ENCODE measurements at regions of chr3 and their contacts with region 1.

Region 1: GRCh38 chr3:12484198-12484974 is at the start of gene TSEN2:
- DNase-seq: peak; percentile 99
- H3K4me3 ChIP-seq: peak within 1 kb of the TSS; percentile 96 to 99
- H3K27ac ChIP-seq: peak within 1 kb of the TSS; percentile 57 to 84; a peak in 3 of 4 replicates
- H3K4me1 ChIP-seq: peaks cover 11 to 18% of the 10 kb centered on the region in 2 experiments; a peak in 1 of 4 replicates
- H3K27me3 ChIP-seq: no peaks in the 10 kb centered on the region
- CTCF ChIP-seq: peak; percentile 27
- EP300 ChIP-seq: no peak; a peak in 1 of 4 replicates
- RAD21 ChIP-seq: peak; percentile 58
- polyA plus RNA-seq, gene TSEN2: 13.0 and 18.6 TPM in 2 replicates

Region 2: GRCh38 chr3:12135029-12135657 is 349.2 kb before region 1 on chr3:
- CTCF ChIA-PET with region 1: interaction called, 97 read pairs
- POLR2A ChIA-PET with region 1: interaction called, 4 read pairs
- DNase-seq: peak; percentile 63
- H3K4me3 ChIP-seq: peak overlapping the region in 1 of 2 experiments; percentile 23; a peak in 1 of 4 replicates
- H3K27ac ChIP-seq: no peak overlapping the region
- H3K4me1 ChIP-seq: peaks cover 0 to 10% of the 10 kb centered on the region in 2 experiments; a peak in 2 of 4 replicates
- H3K27me3 ChIP-seq: 0 out of 2 replicates have a peak, but pooled peaks cover 11% of the 10 kb centered on the region
- CTCF ChIP-seq: peak; percentile 96
- EP300 ChIP-seq: no peak
- RAD21 ChIP-seq: peak; percentile 94

Region 3: GRCh38 chr3:12143949-12144504 is 340.4 kb before region 1 on chr3:
- CTCF ChIA-PET with region 1: interaction called, 27 read pairs
- POLR2A ChIA-PET with region 1: no interaction called
- DNase-seq: no peak
- H3K4me3 ChIP-seq: no peak overlapping the region
- H3K27ac ChIP-seq: no peak overlapping the region
- H3K4me1 ChIP-seq: peaks cover 0 to 10% of the 10 kb centered on the region in 2 experiments; a peak in 1 of 4 replicates
- H3K27me3 ChIP-seq: no peaks in the 10 kb centered on the region
- CTCF ChIP-seq: no peak
- EP300 ChIP-seq: no peak
- RAD21 ChIP-seq: no peak

Region 4: GRCh38 chr3:12273045-12273695 is 211.2 kb before region 1 on chr3:
- CTCF ChIA-PET with region 1: no interaction called
- POLR2A ChIA-PET with region 1: no interaction called
- DNase-seq: no peak
- H3K4me3 ChIP-seq: no peak overlapping the region
- H3K27ac ChIP-seq: no peak overlapping the region
- H3K4me1 ChIP-seq: no peaks in the 10 kb centered on the region
- H3K27me3 ChIP-seq: no peaks in the 10 kb centered on the region
- CTCF ChIP-seq: no peak
- EP300 ChIP-seq: no peak
- RAD21 ChIP-seq: no peak

Region 5: GRCh38 chr3:12423918-12424630 is 60.3 kb before region 1 on chr3:
- CTCF ChIA-PET with region 1: interaction called, 13 read pairs
- POLR2A ChIA-PET with region 1: no interaction called
- DNase-seq: peak; percentile 40
- H3K4me3 ChIP-seq: no peak overlapping the region; a peak in 2 of 4 replicates
- H3K27ac ChIP-seq: peak overlapping the region; percentile 56 to 63; a peak in 3 of 4 replicates
- H3K4me1 ChIP-seq: peaks cover 18 to 31% of the 10 kb centered on the region in 2 experiments
- H3K27me3 ChIP-seq: no peaks in the 10 kb centered on the region
- CTCF ChIP-seq: no peak
- EP300 ChIP-seq: peak in 1 of 2 experiments; percentile 41; a peak in 2 of 4 replicates
- RAD21 ChIP-seq: no peak

Region 6: DNA sequence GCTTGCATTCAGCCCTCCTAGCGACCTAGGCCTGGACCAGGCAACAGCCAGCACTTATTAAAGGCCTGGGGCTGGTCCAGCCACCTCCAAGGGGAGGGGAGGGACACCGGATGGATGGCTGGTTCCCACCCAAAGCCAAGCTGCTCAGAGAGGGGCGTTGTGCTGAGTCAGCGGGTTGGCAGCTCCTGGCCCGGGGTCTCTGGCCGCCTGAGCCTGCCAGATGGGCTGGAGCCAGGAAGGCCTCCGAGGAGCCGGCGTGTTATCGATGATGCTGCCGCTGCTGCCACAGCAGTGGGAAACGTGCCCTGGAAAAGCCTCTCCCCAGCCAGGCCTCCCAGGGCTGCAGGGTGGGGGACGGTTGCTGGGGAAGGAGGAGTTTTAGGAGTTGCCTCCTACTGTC is 43.5 kb before region 1 on chr3:
- CTCF ChIA-PET with region 1: interaction called, 10 read pairs
- POLR2A ChIA-PET with region 1: no interaction called
- DNase-seq: peak; percentile 80
- H3K4me3 ChIP-seq: no peak overlapping the region
- H3K27ac ChIP-seq: peak overlapping the region in 1 of 2 experiments; percentile 30; a peak in 2 of 4 replicates
- H3K4me1 ChIP-seq: peaks cover 21 to 28% of the 10 kb centered on the region in 2 experiments; a peak in 3 of 4 replicates
- H3K27me3 ChIP-seq: no peaks in the 10 kb centered on the region
- CTCF ChIP-seq: no peak
- EP300 ChIP-seq: peak in 1 of 2 experiments; percentile 66; a peak in 1 of 4 replicates
- RAD21 ChIP-seq: no peak

Region 7: DNA sequence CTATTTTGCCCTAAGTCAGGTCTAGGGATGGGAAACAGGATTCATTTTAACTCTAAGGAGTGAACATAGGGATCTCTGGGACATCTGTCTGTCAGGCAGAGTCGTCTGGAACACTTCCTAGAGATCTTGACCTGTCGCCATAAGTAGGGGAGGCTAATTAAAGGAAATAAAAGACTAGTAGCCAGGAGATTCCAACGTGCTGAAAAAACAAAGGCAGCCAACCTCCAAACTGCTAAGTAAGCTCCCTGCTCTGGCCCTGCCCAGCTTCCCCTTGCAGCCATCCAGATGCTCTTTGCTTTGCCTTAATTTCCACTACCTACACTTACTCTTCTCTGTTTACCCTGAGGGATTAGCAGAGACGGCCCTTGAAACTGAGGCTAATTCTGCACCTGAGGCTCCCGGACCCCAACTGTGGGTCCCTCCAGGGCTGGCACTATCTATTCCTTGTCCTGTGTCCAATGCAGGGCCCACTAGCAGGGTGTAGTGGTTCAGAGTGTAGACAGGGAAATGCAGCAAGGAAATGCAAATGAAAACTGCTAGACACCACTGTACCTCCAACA is 18.5 kb before region 1 on chr3:
- CTCF ChIA-PET with region 1: interaction called, 18 read pairs
- POLR2A ChIA-PET with region 1: no interaction called
- DNase-seq: no peak
- H3K4me3 ChIP-seq: no peak overlapping the region
- H3K27ac ChIP-seq: no peak overlapping the region
- H3K4me1 ChIP-seq: peaks cover 2 to 10% of the 10 kb centered on the region in 2 experiments; a peak in 2 of 4 replicates
- H3K27me3 ChIP-seq: no peaks in the 10 kb centered on the region
- CTCF ChIP-seq: no peak
- EP300 ChIP-seq: no peak
- RAD21 ChIP-seq: no peak